ENCODE measurements at regions of chr5 and their contacts with region 1.

Region 1: DNA sequence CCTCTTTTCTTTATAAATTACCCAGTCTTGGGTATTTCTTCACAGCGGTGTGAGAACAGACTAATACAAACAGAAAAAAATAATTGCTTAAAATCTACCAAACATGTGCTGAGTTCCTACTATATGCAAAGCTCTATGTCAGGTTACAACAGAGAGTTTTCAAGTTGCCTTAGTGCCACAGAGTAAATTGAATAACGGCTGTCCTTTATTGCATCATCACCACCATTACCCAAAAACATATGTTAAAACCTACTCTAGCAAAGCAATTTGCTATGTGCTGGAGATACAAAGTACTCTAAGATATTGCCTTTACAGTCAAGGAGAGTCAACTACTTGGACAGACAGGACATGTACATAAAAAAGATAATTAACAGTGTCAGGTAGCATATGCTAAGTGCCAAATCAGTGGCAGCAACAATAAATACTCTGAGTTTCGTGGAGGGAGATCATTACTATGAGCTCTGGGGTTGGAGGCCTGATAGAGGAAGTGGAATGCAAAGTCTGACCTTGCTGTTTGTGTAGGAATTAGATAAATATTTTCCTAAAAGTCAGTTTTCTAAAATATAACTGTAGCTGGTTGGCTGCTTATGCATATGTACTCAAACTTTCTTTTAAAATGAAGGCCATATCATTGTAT is 1058.7 kb upstream of the WWC1 start:
- DNase-seq: no peak
- H3K4me3 ChIP-seq: no peak overlapping the region
- H3K27ac ChIP-seq: no peak overlapping the region
- H3K4me1 ChIP-seq: no peaks in the 10 kb centered on the region
- H3K27me3 ChIP-seq: no peaks in the 10 kb centered on the region
- CTCF ChIP-seq: no peak

Region 2: DNA sequence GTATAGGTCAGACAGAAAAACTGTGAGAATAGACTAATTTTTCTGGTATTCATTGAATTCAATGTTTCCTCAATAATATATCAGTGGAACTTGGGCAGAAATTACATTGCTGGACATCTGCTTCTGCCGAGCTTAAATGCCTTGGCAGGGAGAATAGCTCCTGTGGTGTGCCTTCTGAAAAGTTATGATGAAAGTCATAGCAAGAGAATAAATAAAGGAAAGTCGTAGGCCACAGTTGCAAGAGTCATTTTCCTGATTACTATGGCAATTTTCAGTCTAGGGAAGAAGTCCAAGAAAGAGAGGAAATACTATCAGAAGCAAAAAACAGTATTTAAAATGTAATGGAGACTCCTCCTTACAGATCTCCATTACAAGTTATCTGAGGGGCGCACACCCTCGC is 537.5 kb before region 1 on chr5:
- CTCF ChIA-PET with region 1: interaction called, 11 read pairs
- POLR2A ChIA-PET with region 1: no interaction called
- intact Hi-C with region 1: no loop called
- DNase-seq: no peak
- H3K4me3 ChIP-seq: no peak overlapping the region
- H3K27ac ChIP-seq: no peak overlapping the region
- H3K4me1 ChIP-seq: no peaks in the 10 kb centered on the region
- H3K27me3 ChIP-seq: peaks cover 8% of the 10 kb centered on the region; the same call in 1 of the 2 replicates
- CTCF ChIP-seq: no peak

Region 3: GRCh38 chr5:167128581-167128980 is 104.2 kb before region 1 on chr5:
- CTCF ChIA-PET with region 1: no interaction called
- POLR2A ChIA-PET with region 1: interaction called, 22 read pairs
- intact Hi-C with region 1: no loop called
- DNase-seq: no peak
- H3K4me3 ChIP-seq: no peak overlapping the region
- H3K27ac ChIP-seq: no peak overlapping the region
- H3K4me1 ChIP-seq: no peaks in the 10 kb centered on the region
- H3K27me3 ChIP-seq: no peaks in the 10 kb centered on the region; the same call in 1 of the 2 replicates
- CTCF ChIP-seq: no peak